ENCODE measurements at regions of chr9 and their contacts with region 1.

Region 1: GRCh38 chr9:113591001-113591898 is 127.7 kb downstream of the RGS3 start:
- DNase-seq: peak; percentile 86
- H3K4me3 Mint-ChIP-seq: no peak overlapping the region
- H3K27ac Mint-ChIP-seq: no peak overlapping the region
- H3K4me1 Mint-ChIP-seq: peaks cover 41% of the 10 kb centered on the region
- H3K27me3 Mint-ChIP-seq: no peaks in the 10 kb centered on the region

Region 2: DNA sequence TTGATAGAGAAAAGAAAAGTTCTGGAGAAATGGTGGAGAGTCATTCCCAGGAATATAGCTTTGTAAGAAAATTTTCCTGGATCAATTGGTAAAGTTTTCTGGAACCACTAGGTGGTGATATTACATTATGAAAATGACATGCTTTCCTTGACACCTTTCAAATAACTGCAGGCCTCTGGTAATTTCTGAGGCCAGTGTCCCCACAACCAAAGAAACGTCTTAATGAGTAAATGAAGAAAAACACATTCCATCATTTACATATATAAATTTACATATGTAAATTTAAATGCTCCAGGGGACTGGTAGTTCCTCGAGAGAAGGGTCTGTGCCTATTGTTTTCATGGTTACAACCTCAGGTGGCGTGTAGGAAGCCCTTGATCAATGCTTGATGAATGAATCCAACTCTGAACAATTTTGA is 144.9 kb before region 1 on chr9:
- CTCF ChIA-PET with region 1: interaction called, 110 read pairs
- POLR2A ChIA-PET with region 1: no interaction called
- intact Hi-C with region 1: loop called (anchors 2 kb)
- DNase-seq: no peak
- H3K4me3 Mint-ChIP-seq: no peak overlapping the region
- H3K27ac Mint-ChIP-seq: peak overlapping the region; percentile 55
- H3K4me1 Mint-ChIP-seq: no peaks in the 10 kb centered on the region
- H3K27me3 Mint-ChIP-seq: no peaks in the 10 kb centered on the region

Region 3: DNA sequence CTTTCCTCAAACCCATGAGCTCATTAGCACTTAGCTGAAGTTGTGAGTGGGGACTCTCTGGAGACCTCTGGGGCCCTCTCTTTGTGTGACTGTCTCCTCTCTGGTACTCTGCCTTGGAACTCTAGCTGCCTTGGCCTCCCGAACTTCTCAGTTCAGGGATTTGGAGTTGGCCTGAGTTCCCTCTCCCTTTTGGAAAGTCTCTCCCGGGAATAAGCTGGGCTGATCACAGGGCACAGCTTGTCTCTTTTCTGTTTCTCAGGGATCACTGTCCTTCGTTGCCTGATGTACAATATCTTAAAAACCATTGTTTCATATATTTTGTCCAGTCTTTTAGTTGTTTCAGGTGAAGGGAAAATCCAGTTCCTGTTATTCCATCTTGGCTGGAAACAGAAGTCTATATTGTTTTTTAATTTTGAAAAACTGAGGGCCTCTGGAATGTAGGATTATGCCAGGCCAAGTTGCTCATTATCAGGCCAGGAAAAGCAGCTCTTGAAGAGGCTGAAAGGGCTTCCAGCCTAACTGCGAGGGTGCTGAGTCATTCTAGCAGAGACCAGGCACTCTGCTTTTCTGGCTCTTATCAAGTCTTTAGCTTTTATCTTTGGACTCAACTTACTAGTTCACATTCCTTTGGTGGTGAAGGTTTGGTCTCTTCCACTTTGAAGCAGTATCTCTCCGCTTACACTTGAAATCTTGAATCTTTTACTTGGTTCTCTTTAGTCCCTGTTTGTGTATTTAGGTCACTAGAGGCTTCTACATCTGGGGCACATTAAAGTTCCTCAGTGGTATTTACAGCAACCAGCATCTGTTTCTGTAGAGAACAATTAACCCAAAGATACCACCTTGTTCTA is 136.1 kb before region 1 on chr9:
- CTCF ChIA-PET with region 1: interaction called, 18 read pairs
- POLR2A ChIA-PET with region 1: no interaction called
- intact Hi-C with region 1: no loop called
- DNase-seq: peak; percentile 25
- H3K4me3 Mint-ChIP-seq: no peak overlapping the region
- H3K27ac Mint-ChIP-seq: no peak overlapping the region
- H3K4me1 Mint-ChIP-seq: peaks cover 4% of the 10 kb centered on the region
- H3K27me3 Mint-ChIP-seq: no peaks in the 10 kb centered on the region

Region 4: GRCh38 chr9:113602126-113603044 is 11.1 kb after region 1 on chr9:
- CTCF ChIA-PET with region 1: interaction called, 17 read pairs
- POLR2A ChIA-PET with region 1: no interaction called
- intact Hi-C with region 1: no loop called
- DNase-seq: peak; percentile 91
- H3K4me3 Mint-ChIP-seq: no peak overlapping the region
- H3K27ac Mint-ChIP-seq: no peak overlapping the region
- H3K4me1 Mint-ChIP-seq: peaks cover 19% of the 10 kb centered on the region
- H3K27me3 Mint-ChIP-seq: no peaks in the 10 kb centered on the region

Region 5: GRCh38 chr9:113622600-113623400 is 31.6 kb after region 1 on chr9:
- CTCF ChIA-PET with region 1: interaction called, 18 read pairs
- POLR2A ChIA-PET with region 1: interaction called, 3 read pairs
- intact Hi-C with region 1: loop called (anchors 1 kb)
- DNase-seq: peak; percentile 92
- H3K4me3 Mint-ChIP-seq: peak overlapping the region; percentile 63
- H3K27ac Mint-ChIP-seq: peak overlapping the region; percentile 99
- H3K4me1 Mint-ChIP-seq: peaks cover 54% of the 10 kb centered on the region
- H3K27me3 Mint-ChIP-seq: no peaks in the 10 kb centered on the region

Region 6: GRCh38 chr9:114027159-114027895 is 436.1 kb after region 1 on chr9:
- CTCF ChIA-PET with region 1: no interaction called
- POLR2A ChIA-PET with region 1: no interaction called
- intact Hi-C with region 1: no loop called
- DNase-seq: no peak
- H3K4me3 Mint-ChIP-seq: no peak overlapping the region
- H3K27ac Mint-ChIP-seq: no peak overlapping the region
- H3K4me1 Mint-ChIP-seq: no peaks in the 10 kb centered on the region
- H3K27me3 Mint-ChIP-seq: no peaks in the 10 kb centered on the region